ENCODE measurements at regions of chr2 and their contacts with region 1.

Region 1: DNA sequence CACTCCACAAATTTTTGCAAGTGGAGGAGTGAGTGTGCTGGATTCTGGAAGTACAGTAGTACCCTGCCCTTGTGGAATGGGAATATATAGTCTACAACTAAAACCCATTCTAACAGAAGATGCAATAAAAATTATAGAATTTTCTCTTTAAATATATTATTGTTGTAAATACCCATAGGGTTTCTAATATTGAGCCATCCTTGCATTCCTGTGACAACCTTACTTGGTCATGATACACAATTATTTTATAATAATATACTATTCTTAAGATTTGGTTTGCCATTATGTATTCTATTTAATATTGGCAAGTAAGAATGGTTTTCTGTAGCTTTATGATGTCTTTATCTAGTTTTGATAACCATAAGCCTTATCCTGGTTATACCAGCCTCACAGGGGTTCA is 52.2 kb downstream of the EML6 start:
- DNase-seq: no peak

Region 2: GRCh38 chr2:54931473-54931872 is 155.8 kb after region 1 on chr2:
- intact Hi-C with region 1: loop called in 1 of 2 experiments (anchors 5 kb)
- DNase-seq: no peak

Measured in posterior vena cava (tissue), 2 donors.